ENCODE measurements at regions of chr12 and their contacts with region 1.

Region 1: DNA sequence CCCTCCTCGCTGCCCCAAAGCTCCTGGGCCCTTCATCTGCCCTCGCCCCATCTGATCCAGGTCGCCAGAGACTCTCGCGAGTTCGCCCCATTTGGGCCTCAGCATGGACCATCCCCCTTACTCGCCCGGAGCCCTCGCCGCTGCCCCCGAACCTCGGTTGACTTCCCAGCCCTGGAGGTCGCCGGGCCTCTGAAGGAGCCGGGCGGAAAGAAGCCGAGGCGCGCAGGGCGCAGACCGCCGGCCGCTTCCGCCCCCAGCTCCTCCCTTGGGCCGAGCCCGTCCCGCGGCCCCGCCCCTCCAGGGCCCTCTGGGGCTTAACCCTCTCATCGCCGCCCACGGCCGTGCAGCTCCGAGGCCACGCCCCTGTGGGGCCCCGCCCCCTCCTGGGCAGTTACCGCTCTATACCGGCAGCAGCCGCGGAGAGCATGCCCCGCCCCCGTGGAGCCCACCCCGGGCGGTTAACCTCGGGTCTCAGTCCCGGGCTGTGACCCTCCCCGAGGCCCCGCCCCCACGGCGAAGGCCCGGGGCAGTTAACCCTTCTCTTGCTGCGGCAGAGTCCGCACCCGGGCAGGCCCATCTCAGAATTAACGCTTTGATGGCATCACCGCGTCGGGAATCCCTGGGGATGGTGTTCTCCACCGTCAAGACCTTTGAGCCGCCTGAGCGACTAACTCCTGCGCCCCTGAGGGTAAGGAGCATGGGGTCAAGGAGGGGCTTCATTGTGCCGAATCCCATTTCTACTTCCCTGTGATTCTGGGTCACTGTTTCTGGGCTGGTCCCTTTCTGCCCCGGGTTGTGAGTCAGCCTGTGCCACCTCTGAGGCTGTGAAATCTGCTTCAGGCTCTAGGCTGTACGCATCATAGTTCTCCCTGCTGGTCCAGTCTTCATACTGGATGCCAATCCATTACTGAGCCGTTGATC is at the start of gene SPSB2:
- DNase-seq: peak; percentile 100
- ATAC-seq: peak; percentile 88
- H3K4me3 Mint-ChIP-seq: peak within 1 kb of the TSS; percentile 88
- H3K27ac Mint-ChIP-seq: peak within 1 kb of the TSS; percentile 85
- H3K4me1 Mint-ChIP-seq: peaks cover 37% of the 10 kb centered on the region
- H3K27me3 Mint-ChIP-seq: no peaks in the 10 kb centered on the region
- CTCF ChIP-seq: no peak
- total RNA-seq, gene SPSB2: 14.4 and 16.2 TPM in 2 replicates

Region 2: DNA sequence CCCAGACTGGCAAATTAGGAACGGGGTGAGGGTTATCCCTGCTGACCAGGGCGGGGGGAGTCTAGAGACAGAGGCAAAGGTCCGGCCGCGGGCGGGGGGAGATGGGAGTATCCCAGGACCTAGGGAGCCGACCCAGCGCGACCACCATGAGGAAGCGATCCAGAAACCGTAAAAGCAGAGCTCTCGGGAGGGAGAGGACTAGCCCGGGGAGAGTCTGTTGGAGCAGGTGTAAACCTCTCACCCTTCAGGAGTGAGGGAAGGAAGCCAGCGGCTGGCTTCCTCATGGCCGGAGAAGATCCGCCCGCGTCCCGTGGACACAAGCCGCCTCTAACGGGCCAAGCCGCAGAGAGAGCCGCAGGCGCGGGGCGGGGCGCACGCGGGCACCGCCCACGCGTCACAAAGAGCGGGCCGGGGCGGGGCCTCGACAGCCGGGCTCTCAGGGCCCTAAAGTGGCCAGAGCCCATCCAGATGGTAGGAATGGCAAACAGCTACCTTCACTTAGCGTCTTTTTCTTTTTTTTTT is 226.2 kb before region 1 on chr12 and contains the start of gene ACRBP:
- CTCF ChIA-PET with region 1: no interaction called
- POLR2A ChIA-PET with region 1: no interaction called
- intact Hi-C with region 1: no loop called
- DNase-seq: peak; percentile 71
- ATAC-seq: peak; percentile 83
- H3K4me3 Mint-ChIP-seq: peak within 1 kb of the TSS; percentile 84
- H3K27ac Mint-ChIP-seq: peak within 1 kb of the TSS; percentile 74
- H3K4me1 Mint-ChIP-seq: peaks cover 39% of the 10 kb centered on the region
- H3K27me3 Mint-ChIP-seq: no peaks in the 10 kb centered on the region
- CTCF ChIP-seq: no peak
- total RNA-seq, gene ACRBP: 5.4 and 7.7 TPM in 2 replicates

Region 3: DNA sequence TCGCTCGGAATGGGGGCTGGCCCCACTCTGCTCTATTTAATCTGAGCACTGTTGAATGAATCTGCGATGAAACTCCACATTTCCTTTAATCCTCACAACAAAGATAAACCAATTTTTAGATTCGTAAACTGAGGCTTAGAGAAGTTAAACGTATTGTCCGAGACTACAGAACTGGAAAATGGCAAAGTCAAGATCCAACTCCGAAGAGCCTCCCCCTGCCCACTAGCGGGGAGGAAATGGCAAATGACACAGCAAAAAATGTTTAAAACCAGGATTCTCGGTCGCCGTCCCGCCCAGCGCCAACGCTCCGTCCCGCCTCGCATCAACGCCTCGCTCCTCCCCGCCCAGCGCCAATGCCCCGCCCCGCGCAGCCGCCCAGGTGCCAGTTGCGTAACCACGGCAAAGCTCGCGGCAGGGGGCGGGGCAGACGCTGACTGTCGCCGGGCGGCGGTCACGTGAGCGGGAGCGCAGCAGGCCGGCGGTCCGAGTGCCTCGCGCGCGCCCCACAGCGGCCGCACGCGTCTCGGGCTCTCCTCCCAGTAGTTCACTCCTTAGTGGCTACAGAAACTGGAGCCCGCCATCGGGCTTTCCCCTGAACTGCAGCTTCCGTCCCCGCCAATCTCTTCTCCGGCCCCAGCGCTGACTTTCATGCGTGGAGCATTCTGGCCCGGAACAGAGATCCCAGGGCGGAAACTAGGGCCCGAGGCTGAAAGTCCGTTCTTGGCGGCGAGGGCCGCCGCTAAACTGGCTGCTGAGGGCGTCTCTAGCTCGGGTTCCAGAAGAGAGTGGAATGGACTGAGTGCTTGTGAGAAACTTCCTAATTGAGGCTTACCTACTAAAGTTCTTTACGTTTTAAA is 17.7 kb after region 1 on chr12:
- CTCF ChIA-PET with region 1: interaction called, 52 read pairs
- POLR2A ChIA-PET with region 1: interaction called, 64 read pairs
- intact Hi-C with region 1: loop called (anchors 1 kb)
- DNase-seq: peak; percentile 97
- ATAC-seq: peak; percentile 93
- H3K4me3 Mint-ChIP-seq: peak overlapping the region; percentile 84
- H3K27ac Mint-ChIP-seq: peak overlapping the region; percentile 93
- H3K4me1 Mint-ChIP-seq: peaks cover 15% of the 10 kb centered on the region
- H3K27me3 Mint-ChIP-seq: no peaks in the 10 kb centered on the region
- CTCF ChIP-seq: peak; percentile 65

Region 4: DNA sequence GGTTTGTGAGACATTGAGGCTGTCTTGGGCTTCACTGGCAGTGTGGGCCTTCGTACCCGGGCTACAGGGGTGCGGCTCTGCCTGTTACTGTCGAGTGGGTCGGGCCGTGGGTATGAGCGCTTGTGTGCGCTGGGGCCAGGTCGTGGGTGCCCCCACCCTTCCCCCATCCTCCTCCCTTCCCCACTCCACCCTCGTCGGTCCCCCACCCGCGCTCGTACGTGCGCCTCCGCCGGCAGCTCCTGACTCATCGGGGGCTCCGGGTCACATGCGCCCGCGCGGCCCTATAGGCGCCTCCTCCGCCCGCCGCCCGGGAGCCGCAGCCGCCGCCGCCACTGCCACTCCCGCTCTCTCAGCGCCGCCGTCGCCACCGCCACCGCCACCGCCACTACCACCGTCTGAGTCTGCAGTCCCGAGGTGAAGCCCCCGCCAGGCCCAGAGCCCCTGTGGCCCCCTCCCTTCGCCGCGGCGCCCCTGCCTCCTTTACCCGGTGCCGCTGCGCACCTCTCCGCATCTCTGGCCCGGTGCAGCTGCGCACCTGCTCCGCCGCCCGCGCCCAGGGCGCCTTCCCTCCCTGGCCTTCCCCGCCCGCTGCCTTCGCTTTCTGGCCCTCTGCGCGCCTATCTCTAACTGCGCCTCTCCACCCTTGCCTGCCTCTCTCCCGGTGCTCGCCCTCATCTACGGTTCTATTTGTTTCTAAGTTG is 41.0 kb after region 1 on chr12 and contains the start of gene ENO2:
- CTCF ChIA-PET with region 1: interaction called, 5 read pairs
- POLR2A ChIA-PET with region 1: interaction called, 9 read pairs
- intact Hi-C with region 1: loop called (anchors 1 kb)
- DNase-seq: peak; percentile 71
- ATAC-seq: peak; percentile 93
- H3K4me3 Mint-ChIP-seq: peak within 1 kb of the TSS; percentile 90
- H3K27ac Mint-ChIP-seq: peak within 1 kb of the TSS; percentile 61
- H3K4me1 Mint-ChIP-seq: peaks cover 30% of the 10 kb centered on the region
- H3K27me3 Mint-ChIP-seq: peaks cover 2% of the 10 kb centered on the region
- CTCF ChIP-seq: no peak
- total RNA-seq, gene ENO2: 20.9 and 31.0 TPM in 2 replicates

Region 5: GRCh38 chr12:7018350-7019042 is 145.1 kb after region 1 on chr12 and contains the start of gene LPCAT3:
- CTCF ChIA-PET with region 1: no interaction called
- POLR2A ChIA-PET with region 1: interaction called, 4 read pairs
- intact Hi-C with region 1: loop called (anchors 1 kb)
- DNase-seq: peak; percentile 94
- ATAC-seq: peak; percentile 96
- H3K4me3 Mint-ChIP-seq: peak within 1 kb of the TSS; percentile 87
- H3K27ac Mint-ChIP-seq: peak within 1 kb of the TSS; percentile 77
- H3K4me1 Mint-ChIP-seq: peaks cover 20% of the 10 kb centered on the region
- H3K27me3 Mint-ChIP-seq: no peaks in the 10 kb centered on the region
- CTCF ChIP-seq: no peak
- total RNA-seq, gene LPCAT3: 19.3 and 21.3 TPM in 2 replicates

Region 6: DNA sequence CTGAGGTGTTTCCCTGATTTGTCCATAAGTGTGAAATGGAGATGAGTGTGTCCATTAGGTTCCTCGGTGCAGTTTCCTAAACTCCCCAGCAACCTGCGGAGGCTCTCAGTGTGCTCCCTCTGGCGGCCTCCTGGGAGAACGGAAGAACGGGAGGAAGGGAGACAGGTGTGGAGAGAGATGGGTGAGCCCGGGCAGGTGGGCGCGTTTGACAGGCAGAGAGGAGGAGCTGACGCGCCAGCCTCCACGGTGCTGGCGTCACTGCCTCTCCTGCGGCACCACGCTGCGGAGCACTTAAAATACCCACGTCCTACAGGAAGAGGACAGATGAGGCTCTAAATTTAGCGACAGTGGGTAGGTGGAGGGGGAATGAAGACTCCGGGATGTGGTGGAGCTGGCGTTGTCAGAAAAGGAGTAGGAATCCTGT is 289.3 kb after region 1 on chr12:
- CTCF ChIA-PET with region 1: no interaction called
- POLR2A ChIA-PET with region 1: no interaction called
- intact Hi-C with region 1: no loop called
- DNase-seq: no peak
- ATAC-seq: no peak
- H3K4me3 Mint-ChIP-seq: no peak overlapping the region
- H3K27ac Mint-ChIP-seq: no peak overlapping the region
- H3K4me1 Mint-ChIP-seq: peaks cover 2% of the 10 kb centered on the region
- H3K27me3 Mint-ChIP-seq: peaks cover 20% of the 10 kb centered on the region
- CTCF ChIP-seq: no peak

Region 7: GRCh38 chr12:7188562-7189397 is 315.4 kb after region 1 on chr12:
- CTCF ChIA-PET with region 1: interaction called, 3 read pairs
- POLR2A ChIA-PET with region 1: interaction called, 3 read pairs
- intact Hi-C with region 1: loop called (anchors 1 kb)
- DNase-seq: peak; percentile 46
- ATAC-seq: peak; percentile 39
- H3K4me3 Mint-ChIP-seq: peak overlapping the region; percentile 92
- H3K27ac Mint-ChIP-seq: peak overlapping the region; percentile 91
- H3K4me1 Mint-ChIP-seq: peaks cover 31% of the 10 kb centered on the region
- H3K27me3 Mint-ChIP-seq: no peaks in the 10 kb centered on the region
- CTCF ChIP-seq: no peak